ENCODE measurements at regions of chr1 and their contacts with region 1.

Region 1: DNA sequence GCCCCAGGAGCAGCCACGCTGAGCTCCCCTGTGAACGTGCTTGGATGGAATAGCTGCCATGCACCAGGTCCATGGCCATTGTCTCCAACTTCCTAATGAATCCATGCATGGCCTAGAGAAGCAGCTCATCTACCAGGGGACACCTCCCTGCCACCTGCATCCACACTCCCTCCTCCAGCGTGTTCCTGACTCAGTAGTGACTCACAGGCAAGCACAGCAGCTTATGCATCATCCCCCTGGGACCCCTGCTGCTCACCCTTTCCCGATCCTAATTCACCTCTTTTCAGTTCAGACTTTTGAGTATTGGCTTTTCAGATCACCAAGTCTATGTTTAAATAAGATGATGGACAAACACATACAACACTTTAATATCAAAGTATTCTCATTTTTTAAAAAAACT is 39.9 kb upstream of the TADA1 start:
- DNase-seq: peak; percentile 40
- H3K4me3 ChIP-seq: no peak overlapping the region
- H3K27ac ChIP-seq: no peak overlapping the region
- H3K4me1 ChIP-seq: no peaks in the 10 kb centered on the region
- H3K27me3 ChIP-seq: peaks cover 73% of the 10 kb centered on the region
- CTCF ChIP-seq: no peak

Region 2: DNA sequence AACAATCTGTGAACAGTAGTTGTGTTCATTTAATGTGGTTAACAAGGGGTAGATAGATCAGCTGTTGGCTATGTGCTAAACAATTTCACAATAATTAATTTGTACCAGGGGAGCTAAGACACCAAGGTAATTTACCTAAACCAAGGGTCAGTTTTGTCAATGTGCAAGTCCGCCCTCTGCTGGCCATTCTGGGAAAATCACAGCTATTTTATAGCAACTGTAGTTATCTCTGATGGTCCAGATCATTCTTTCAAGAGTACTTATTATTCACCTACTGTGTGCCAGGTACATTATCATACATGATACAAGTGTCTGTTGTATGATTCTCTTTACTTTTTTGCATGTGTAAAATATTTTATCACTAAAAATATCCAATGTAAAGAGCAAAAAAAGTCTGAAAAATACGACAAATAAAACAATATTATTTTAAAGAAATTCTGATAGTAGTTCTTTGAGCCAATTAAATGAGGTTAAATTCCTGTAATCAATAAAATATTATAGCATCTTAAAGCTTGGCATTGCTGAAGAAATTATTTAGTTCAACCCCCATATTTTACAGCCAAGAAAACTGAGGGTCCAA is 436.8 kb before region 1 on chr1:
- CTCF ChIA-PET with region 1: no interaction called
- POLR2A ChIA-PET with region 1: no interaction called
- intact Hi-C with region 1: no loop called
- DNase-seq: peak; percentile 41
- H3K4me3 ChIP-seq: no peak overlapping the region
- H3K27ac ChIP-seq: no peak overlapping the region
- H3K4me1 ChIP-seq: no peaks in the 10 kb centered on the region
- H3K27me3 ChIP-seq: peaks cover 17% of the 10 kb centered on the region
- CTCF ChIP-seq: peak; percentile 86

Region 3: DNA sequence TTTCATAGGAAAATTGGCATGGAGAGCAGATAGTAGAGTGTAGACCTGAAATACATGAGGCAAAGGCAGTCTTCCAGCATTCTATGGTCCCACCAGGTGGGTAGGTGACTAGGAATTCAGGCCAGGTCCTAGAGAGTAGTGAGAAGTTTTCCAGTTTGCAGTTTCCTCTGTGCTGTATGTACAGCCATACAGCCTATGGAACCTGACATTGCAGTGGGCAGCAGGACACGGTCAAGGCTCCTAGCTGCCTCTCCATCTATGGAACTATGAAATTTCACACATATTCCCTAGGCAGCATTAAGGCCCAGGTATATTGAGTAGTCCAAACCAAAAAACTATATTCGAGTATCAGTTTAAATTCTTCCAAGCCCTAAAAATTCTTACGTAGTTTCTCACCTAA is 60.4 kb before region 1 on chr1:
- CTCF ChIA-PET with region 1: no interaction called
- POLR2A ChIA-PET with region 1: no interaction called
- intact Hi-C with region 1: no loop called
- DNase-seq: no peak
- H3K4me3 ChIP-seq: no peak overlapping the region
- H3K27ac ChIP-seq: no peak overlapping the region
- H3K4me1 ChIP-seq: no peaks in the 10 kb centered on the region
- H3K27me3 ChIP-seq: no peaks in the 10 kb centered on the region
- CTCF ChIP-seq: no peak

Region 4: DNA sequence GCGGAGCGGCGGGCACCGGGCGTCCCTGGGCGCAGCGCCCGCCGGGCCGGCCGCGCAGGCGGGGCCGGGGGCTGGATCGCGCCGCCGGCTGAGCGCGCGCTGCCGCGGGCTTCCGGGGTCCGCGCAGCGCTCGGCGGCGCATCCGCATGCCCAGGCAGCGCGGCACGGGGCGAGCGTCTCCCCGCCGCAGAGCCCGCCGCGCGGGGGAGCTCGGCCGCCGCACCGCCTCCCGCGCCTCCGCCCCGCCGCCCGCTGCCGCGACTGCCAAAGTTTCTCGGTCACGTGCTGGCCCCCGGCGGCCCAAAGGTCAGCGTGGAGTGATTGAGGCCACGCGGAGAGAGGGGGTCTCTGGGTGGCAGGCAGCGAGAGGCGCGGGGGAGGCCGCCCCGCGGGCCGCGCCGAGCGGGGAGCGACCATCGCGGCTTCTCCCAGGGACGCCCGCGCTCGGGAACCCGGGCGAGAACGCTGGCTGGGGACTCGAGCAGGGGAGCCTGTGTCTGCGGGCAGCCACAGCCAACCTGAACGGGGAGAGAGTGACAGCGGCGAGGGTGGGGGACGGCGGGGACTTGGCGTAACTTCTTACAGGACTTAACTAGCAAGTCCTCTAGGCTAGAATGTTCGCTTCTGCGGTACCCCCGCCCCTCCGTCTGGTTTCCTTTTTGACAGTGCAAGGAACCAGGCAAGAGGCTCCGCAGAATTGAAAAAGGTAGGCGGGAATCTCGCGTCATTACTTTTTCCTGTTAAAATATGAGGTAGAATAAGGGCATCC is 59.6 kb after region 1 on chr1 and contains the start of gene ILDR2:
- CTCF ChIA-PET with region 1: no interaction called
- POLR2A ChIA-PET with region 1: no interaction called
- intact Hi-C with region 1: loop called (anchors 5 kb)
- DNase-seq: peak; percentile 48
- H3K4me3 ChIP-seq: peak within 1 kb of the TSS; percentile 46
- H3K27ac ChIP-seq: no peak within 1 kb of the TSS
- H3K4me1 ChIP-seq: no peaks in the 10 kb centered on the region
- H3K27me3 ChIP-seq: peaks cover 96% of the 10 kb centered on the region
- CTCF ChIP-seq: no peak
- total RNA-seq, gene ILDR2: not detected in 2 replicates

Region 5: DNA sequence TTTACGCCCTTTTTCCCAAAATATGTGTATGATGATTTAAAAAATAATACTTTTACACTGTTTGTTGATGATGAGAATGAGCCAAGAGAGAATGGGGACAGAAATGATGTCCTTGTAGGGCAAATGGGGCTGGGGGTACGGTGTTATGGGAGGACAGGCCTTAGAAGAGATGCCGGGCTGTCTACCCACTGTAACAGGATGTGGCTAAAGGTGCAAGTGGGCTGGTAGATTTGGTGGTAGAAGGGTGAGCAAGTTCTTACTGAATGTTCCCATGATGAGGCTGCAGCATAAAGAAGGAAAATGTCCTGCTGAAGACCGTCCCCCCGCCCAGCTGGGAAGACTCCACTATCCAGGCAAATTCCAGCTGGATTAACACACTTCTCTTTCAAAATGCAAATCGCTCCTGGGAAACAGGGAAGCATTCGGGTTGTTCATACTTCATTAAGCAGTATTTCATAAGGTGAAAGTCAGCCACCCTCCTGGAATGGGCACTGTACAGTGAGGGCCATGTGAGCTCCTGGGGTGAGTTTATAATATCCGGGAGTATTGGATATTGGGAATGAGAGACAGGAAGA is 160.3 kb after region 1 on chr1:
- CTCF ChIA-PET with region 1: no interaction called
- POLR2A ChIA-PET with region 1: no interaction called
- intact Hi-C with region 1: no loop called
- DNase-seq: no peak
- H3K4me3 ChIP-seq: no peak overlapping the region
- H3K27ac ChIP-seq: no peak overlapping the region
- H3K4me1 ChIP-seq: no peaks in the 10 kb centered on the region
- H3K27me3 ChIP-seq: peaks cover 12% of the 10 kb centered on the region
- CTCF ChIP-seq: no peak

Region 6: DNA sequence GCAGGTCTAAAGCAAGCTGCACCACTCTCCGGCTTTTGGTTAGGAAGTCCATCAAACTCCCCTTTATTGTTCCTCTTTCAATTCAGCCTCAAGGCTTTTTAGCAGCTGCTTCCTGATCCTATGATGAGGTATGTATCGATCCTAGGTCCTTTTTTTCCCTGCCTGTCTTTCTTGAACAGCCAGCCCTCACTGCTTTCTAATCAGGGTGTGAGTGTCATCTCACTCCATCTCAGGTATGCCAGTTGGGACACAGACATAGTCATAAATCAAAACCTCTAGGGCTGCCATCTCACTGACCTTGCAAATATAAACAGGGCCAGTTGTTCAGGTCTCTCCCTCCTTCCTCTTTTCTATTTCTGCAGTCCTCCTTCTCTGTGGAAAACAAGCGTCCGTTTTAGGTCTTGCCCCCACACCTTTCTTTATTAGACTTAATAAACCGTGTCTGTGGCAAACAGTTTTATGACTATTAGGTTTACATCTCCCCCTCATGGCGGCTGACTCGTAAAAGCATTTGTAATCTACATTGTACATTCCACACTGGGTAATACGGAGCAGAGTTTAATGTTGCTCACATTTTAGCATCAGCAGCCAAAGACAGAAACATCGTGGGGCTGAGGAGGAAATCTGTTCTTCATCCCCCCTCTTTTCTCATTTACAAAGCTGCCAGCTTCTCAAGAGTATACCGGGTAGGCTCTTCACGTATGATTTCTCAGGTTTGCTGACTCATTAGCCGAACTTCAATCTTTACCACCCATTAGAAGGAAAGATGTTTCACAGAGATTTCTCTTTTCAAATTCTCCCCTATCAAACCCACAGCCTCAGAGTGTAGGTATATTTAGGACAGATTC is 189.6 kb after region 1 on chr1:
- CTCF ChIA-PET with region 1: no interaction called
- POLR2A ChIA-PET with region 1: no interaction called
- intact Hi-C with region 1: no loop called
- DNase-seq: peak; percentile 25
- H3K4me3 ChIP-seq: no peak overlapping the region
- H3K27ac ChIP-seq: no peak overlapping the region
- H3K4me1 ChIP-seq: peaks cover 9% of the 10 kb centered on the region
- H3K27me3 ChIP-seq: no peaks in the 10 kb centered on the region
- CTCF ChIP-seq: 0 out of 2 replicates have a peak, but pooled peaks have one; percentile 11